AG04449 (cell line): ENCODE measurements at regions of chr20 and their contacts with region 1.

Region 1: DNA sequence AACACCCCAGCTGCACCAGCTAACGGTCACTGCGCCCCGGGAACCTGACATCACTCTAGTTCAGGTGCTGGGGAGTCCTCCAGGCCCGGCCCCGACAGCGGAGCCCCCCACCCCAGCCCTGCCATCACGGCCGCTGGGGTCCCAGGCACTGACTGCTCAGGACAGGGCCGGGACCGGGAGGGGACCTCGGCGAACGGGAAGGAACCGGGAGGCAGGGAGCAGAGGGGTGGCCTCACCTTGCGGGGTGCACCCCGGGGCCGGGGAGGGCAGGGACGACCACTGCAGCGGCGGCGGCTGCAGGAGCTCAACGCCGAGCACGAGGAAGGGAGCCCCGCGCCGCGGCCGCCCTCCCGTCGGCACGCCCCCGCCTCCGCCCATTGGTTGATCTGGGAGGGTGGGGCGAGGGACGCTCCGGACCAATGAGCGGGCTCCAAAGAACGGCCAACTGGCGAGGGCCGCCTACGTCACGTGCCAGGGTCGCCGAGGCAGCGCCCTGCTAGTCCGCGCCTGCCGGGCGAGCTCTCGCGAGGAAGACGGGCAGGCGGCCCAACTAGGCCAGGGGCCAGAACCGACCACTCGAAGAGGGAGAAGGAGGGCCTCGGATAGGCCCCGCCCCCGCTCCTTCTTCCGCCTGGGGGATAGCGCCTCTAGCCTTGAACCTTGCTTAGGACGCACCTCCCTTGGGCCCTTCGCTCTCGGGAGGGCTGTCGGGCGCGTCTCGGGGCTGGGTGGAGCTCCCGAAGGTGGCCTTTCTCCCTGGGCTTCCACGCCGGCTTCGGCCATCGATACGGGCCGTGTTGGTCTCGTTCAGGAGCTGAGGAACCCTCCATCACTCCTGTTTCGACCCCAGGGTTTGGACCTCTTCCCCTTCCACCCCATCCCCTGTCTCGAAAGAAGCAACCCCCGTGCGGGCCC is at the start of gene ADISSP:
- DNase-seq: peak; percentile 83
- H3K4me3 ChIP-seq: peak within 1 kb of the TSS; percentile 87
- CTCF ChIP-seq: peak; percentile 17

Region 2: DNA sequence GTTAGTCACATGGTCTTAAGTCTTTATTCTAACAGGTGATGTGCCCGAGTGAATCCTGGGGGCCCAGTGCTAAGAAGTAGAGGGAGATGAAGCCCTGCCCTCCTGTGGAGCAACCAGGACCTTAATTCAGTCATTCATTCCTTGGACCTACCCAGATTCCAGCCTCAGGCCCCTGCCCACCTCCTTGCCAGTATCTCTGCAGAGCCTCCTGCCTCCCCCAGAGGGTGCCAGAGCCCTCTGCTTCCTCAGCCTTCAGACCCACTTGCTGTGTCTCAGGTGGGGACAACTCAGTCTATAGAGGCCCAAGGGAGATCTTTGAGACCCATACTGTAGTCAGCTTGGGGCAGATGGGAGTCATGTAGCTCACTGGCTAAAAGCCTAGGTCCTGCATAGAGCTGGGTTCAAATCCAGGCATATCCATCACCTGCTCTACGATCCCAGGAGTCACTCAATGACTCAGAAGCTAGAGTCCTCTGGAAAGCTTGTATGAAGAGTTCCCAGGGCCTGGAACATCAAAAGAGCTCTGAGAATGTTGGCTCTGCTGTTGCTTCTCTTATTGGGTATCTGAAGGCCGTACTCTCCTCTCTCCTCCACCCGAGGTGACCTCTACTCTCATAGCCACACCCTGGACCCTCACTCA is 51.4 kb before region 1 on chr20:
- CTCF ChIA-PET with region 1: interaction called, 19 read pairs
- POLR2A ChIA-PET with region 1: no interaction called
- DNase-seq: no peak
- H3K4me3 ChIP-seq: no peak overlapping the region
- CTCF ChIP-seq: peak; percentile 86

Region 3: DNA sequence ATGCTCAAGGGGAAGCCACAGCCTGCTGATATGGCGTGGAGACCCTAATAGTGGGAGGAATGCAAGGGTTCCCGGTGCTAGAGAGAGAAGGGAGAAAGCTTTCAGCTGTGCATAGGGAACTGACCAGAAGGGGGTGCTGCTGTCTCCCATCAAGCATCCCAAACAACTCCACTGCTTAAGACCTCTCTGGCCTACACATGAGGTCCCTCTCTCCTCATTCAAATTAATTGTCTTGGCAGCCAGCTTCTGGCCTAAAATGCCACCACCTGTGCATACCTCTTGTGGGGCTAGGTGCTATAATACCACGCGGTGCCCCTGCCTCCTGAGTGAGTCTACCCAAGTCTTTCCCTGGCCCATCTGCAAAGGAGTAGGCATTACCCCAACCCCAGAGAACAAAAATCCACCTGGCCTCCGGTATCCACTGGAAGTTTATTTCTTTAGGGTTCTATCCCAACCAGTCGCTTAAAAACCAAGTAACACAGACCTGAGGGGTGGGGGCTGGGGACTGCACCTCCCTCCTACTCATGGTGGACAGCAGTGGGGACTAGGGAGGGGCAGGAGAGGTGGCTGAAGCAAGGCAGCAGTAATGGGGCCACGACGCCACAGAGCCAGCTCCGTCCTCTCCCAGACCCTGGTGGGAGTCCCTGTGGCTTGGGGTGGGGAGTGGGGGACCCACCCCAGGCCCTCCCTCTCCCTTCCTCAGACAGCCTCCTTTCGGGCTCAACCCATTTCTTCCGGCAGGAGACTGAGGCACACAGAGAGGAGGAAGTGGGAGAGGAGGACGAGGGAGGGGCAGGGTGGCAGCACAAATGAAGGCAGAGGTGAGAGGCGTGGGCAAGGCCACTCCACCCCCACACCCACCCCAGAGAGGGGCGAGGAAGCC is 14.3 kb before region 1 on chr20:
- CTCF ChIA-PET with region 1: interaction called, 119 read pairs
- POLR2A ChIA-PET with region 1: interaction called, 6 read pairs
- DNase-seq: peak; percentile 16
- H3K4me3 ChIP-seq: no peak overlapping the region
- CTCF ChIP-seq: peak; percentile 83

Region 4: DNA sequence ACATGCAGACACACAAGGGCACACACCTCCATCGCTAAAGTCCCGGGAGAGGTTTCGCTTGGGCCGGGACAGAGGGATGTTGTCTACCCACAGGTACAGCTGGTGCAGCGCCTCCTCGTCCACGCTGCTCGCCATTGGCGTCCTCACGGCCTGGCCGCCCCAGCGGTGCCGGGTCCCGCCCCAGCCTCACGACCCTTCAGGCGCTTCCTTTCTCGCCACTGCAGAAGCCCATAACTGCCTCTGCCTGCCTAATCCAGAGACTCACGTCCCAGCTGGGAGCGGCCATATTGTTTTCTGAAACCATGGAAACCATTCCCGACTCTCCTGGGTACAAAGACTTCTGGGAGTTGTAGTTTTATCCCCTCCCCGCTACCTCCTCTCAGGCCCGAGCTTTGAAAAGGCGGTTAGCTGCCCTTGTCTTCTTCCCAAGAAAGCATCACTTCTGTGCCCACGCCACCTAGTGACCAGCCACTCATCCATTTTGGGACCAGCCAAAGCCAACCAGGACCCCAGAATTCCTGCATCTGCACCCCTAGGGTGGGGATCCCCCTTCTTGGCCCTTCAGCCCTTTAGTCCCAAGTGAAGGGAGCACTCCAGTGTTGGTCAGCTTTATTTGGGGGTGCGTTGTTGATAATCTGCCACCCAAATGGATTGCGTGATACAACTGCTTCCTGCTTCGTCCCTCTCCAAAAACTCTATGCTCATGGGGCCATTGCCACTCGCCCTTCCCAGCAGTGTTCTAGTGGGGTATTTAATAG is 13.6 kb after region 1 on chr20 and contains the start of gene SPEF1:
- CTCF ChIA-PET with region 1: interaction called, 38 read pairs
- POLR2A ChIA-PET with region 1: interaction called, 28 read pairs
- DNase-seq: peak; percentile 59
- H3K4me3 ChIP-seq: peak within 1 kb of the TSS; percentile 60
- CTCF ChIP-seq: peak; percentile 68

Region 5: DNA sequence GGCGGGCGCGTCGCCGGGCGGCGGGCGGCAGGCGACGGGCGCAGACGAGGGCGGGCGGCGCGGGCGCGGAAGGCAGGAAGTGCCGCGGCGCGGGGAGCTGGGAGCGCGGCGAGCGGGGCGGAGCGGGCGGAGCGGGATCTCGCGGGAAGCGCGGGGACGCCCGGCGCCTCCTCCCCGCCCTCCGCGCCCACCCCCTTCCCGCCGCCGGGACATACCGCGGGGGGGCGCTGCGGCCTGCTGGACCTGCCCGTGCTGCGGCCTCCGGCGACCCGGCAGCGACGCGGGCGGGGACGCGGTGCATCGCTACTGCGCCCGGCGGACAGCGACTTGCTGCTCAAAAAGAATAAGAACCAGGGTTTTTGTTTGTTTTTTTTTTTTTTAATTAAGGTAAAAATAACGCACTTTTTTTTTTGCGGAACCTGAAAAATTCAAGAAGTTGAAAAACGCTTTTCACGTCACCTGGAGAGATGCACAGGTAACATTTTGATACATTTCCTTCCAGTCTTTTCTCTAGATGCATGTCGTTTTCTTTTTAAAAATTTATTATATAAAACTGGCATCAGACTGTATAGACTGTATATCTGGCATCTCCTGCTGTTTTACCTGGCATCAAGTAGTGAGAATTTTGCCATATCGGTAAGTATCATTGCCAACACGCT is 19.1 kb after region 1 on chr20 and contains the start of gene CENPB:
- CTCF ChIA-PET with region 1: interaction called, 17 read pairs
- POLR2A ChIA-PET with region 1: interaction called, 9 read pairs
- DNase-seq: no peak
- H3K4me3 ChIP-seq: peak within 1 kb of the TSS; percentile 80
- CTCF ChIP-seq: peak; percentile 70